Right ventricle myocardium superior (tissue), 1 donor: ENCODE measurements at regions of chr4 and their contacts with region 1.

Region 1: DNA sequence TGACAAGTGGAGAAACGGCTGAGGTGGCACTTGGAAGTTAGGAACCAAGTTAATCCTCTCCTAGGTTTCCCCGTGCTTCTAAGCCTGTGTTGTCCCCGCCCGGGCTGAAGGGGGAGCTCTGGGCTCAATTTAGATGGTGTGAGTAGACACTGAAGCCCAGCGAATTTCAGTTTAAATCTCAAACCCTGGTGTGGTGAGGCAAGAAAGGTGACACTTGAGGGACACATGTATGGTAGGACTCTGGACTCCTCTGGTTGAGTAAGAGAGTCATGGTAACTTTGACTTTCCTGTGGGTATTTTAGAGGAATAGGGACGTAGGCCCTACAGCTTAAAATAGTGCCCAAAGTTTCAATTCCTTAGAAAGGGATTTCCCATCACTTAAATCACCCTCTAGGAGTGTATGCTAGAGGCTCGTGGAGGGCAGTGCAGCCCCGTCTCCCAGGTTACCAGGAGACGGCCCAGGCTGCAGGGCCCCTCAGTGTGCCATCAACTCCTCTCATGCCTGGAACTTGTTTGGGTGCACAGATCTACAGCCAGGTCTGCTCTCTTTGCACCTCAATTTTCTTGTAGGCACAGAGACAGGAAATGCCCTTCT is 24.0 kb downstream of the HAND2 start:
- DNase-seq: peak; percentile 83
- ATAC-seq: peak; percentile 71

Region 2: GRCh38 chr4:173243321-173243720 is 262.7 kb before region 1 on chr4:
- intact Hi-C with region 1: no loop called
- DNase-seq: no peak
- ATAC-seq: no peak

Region 3: GRCh38 chr4:173334085-173334772 is 171.8 kb before region 1 on chr4 and contains the start of gene HMGB2:
- intact Hi-C with region 1: no loop called
- DNase-seq: peak; percentile 100
- ATAC-seq: peak; percentile 96
- total RNA-seq, gene HMGB2: 35.2 TPM

Region 4: DNA sequence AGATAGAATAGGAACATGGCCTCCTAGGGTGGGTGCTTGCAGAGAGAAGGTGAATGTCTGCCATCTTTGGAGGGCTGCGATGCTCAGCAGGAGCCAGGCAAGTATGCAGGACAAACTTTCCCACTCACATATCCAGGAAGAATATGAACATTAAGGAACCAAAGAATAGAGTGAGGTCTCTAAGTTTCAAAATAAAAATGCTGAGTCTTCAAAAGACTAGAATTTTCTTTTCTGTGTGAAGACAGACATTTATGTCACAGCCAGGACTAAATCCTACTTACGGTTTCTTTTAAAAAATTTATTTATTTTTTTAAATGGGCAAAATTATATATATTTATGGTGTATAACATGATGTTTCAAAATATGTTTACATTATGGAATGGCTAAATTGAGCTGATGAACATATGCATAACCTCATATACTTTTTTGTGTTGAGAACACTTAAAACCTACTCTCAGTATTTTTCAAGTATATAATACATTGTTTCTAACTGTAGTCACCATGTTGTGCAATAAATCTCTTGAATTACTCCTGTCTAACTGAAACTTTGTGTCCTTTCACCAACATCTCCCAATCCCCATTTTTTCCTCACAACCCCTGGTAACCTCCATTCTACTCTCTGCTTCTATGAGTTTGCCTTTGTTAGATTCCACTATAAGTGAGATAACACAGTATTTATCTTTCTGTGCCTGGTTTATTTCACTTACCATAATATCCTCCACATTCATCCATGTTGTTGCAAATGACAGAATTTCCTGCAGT is 201.8 kb after region 1 on chr4:
- intact Hi-C with region 1: no loop called
- DNase-seq: no peak
- ATAC-seq: no peak

Region 5: GRCh38 chr4:173752610-173753230 is 246.7 kb after region 1 on chr4:
- intact Hi-C with region 1: loop called (anchors 5 kb)
- DNase-seq: no peak
- ATAC-seq: no peak

Region 6: DNA sequence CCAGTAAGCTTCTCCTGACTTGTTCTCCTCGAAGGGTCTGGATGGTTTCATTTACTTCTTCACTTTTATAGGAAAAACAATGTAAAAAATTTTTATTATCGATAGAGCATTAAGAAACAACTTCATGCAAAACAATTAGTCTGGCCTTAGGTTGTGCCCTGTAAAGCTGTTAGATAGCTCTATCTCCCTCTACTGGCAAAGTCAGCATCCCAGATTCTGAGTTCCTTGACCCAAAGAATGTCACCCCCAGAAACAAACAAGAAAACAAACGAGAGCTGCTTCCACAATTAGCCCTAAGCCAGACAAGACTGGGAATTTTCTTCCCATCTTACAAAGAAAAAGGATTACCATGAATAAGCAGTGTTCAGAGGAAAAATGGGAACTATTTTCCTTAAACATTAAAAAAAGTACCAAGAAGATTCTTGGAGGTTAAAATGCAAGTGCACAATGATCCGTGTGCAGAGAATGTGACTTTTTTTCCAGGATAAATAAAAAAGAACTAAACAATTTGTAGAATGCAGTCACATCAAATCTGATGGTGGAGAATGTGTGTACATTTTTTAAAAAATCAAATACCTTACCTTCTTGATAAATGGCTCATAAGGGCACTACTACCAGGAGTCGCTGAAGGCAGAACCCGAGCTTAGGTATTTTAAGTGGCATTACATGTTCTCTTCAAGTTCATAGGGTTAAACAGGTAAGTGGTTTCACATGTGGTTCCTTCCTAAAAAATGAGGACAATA is 484.3 kb after region 1 on chr4:
- intact Hi-C with region 1: loop called (anchors 2 kb)
- DNase-seq: no peak
- ATAC-seq: peak; percentile 92

Region 7: GRCh38 chr4:174120446-174121295 is 614.6 kb after region 1 on chr4:
- intact Hi-C with region 1: loop called (anchors 10 kb)
- DNase-seq: peak; percentile 76
- ATAC-seq: peak; percentile 86

Region 8: DNA sequence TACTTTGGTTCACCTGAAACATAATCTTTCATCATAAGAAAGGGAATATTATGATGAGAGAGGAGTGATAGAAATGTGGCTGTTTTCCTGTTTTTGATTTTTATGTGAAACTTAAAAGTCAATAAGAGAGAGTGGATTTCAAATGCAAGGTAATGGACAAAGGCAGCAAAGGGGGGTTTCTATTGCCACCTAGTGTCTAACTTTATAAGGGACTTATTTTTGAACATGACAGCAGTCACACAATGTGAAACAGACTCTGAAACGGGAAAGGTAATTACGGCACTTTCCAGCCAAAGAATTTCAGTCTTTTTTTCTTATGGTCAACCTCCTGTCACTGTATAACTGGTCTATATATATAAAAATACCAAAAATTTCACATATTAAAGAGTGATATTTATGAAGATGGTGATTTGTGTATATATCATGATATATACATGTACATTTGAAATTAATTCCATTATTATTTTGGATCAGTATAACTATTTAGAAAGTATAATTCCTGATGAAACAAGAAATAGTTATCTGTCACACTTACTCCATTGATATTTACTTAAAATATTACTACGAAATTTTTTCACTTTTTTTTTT is 650.3 kb after region 1 on chr4:
- intact Hi-C with region 1: loop called (anchors 5 kb)
- DNase-seq: no peak
- ATAC-seq: peak; percentile 89